ENCODE measurements at regions of chr4 and their contacts with region 1.

Region 1: DNA sequence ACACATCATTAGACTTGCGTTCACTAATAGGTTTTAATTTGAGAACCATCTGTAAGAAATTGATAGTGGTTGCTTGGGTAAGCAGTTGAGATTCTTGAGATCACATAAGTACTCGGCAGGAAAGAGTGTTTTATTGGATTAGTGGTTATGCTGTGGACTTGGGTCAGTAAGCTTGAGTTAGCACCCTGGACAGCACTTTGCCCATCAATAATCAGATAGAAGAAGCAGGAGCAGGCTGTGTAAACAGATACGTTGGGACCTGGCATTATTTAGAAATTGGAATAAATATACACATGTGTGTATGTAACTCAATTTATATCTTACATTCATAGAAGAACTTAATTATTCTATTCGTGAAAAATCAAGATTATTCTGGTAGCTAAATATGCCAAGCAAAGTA is 357.5 kb upstream of the SMIM31 start:
- DNase-seq: no peak
- H3K4me3 ChIP-seq: no peak overlapping the region
- H3K27ac ChIP-seq: no peak overlapping the region
- H3K4me1 ChIP-seq: no peaks in the 10 kb centered on the region
- H3K27me3 ChIP-seq: peaks cover 2% of the 10 kb centered on the region
- CTCF ChIP-seq: no peak

Region 2: DNA sequence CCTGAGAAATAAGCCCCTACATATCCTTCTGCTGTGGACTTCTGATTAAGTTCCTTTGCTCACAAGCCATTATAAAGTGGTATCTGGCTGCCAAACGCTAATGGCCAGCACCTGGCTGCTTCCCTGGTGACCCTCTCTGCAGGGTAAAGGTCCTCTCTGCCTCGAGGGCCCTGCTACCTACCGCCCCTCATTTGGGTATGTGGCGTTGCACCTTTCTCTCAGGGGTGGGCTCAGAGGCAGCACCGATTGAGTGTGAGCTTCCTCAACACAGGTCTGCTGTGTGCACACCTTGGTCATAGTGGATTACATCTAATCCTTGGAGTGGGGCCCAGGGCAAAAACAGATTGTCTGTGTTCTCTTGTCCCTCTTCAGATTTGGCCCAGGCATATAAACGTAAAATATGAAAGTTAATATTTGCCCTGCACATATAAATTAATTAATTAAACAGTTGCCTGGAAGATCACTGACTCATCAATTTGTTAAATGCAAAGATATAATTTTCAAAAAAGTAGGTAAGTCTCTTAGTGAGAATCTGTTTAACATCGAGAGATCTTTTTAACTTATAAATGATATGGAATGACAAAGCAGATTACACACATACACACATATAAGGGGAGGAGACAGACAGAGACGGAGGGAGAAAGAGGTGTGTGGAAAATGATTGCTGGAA is 183.0 kb after region 1 on chr4:
- CTCF ChIA-PET with region 1: no interaction called
- dilution Hi-C with region 1: no loop called
- in situ Hi-C with region 1: no loop called
- intact Hi-C with region 1: loop called (anchors 2 kb)
- DNase-seq: no peak
- H3K4me3 ChIP-seq: no peak overlapping the region
- H3K27ac ChIP-seq: no peak overlapping the region
- H3K4me1 ChIP-seq: no peaks in the 10 kb centered on the region
- H3K27me3 ChIP-seq: no peaks in the 10 kb centered on the region
- CTCF ChIP-seq: no peak

Region 3: GRCh38 chr4:166128452-166128851 is 1732.0 kb after region 1 on chr4:
- CTCF ChIA-PET with region 1: no interaction called
- dilution Hi-C with region 1: no loop called
- in situ Hi-C with region 1: no loop called
- intact Hi-C with region 1: no loop called
- DNase-seq: peak; percentile 70
- H3K4me3 ChIP-seq: no peak overlapping the region
- H3K27ac ChIP-seq: no peak overlapping the region
- H3K4me1 ChIP-seq: peaks cover 4% of the 10 kb centered on the region
- H3K27me3 ChIP-seq: no peaks in the 10 kb centered on the region
- CTCF ChIP-seq: no peak

Measured in mammary epithelial cell (primary cell).